Ascending aorta (tissue), 2 donors: ENCODE measurements at regions of chr1 and their contacts with region 1.

Region 1: DNA sequence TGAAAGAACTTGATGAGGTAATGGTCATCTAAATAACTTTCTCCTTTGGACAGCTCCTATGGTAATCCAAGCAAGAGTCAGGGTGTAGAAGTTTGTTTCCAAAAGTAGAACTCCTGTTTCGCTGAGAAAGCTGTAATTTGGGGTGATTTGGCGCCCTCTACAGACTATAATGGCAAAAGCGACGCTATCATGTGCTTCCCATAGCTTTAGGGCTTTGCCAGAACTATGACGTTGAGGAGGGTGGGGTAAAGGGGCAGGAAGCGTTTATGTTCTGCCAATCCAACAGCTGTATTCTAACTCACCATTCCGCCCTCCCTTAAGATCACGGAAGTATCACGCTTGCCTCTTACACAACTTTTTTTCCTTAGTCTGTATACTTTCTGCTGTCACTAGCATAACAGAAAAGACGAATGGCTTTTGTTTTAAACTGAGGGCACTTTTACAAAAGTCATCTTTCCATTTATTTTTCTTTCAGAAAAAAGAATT is at the start of gene FMO4:
- DNase-seq: peak; percentile 85 to 97
- H3K4me3 ChIP-seq: peak within 1 kb of the TSS; percentile 52 to 61
- H3K27ac ChIP-seq: peak within 1 kb of the TSS; percentile 87
- H3K4me1 ChIP-seq: peaks cover 2 to 23% of the 10 kb centered on the region in 2 donors
- H3K27me3 ChIP-seq: no peaks in the 10 kb centered on the region
- CTCF ChIP-seq: peak; percentile 59 to 84 (median 64)
- total RNA-seq, gene FMO4: 30.1 TPM

Region 2: GRCh38 chr1:170967042-170967910 is 346.6 kb before region 1 on chr1:
- intact Hi-C with region 1: loop called (anchors 2 kb)
- DNase-seq: no peak
- H3K4me3 ChIP-seq: no peak overlapping the region
- H3K27ac ChIP-seq: no peak overlapping the region
- H3K4me1 ChIP-seq: no peaks in the 10 kb centered on the region
- H3K27me3 ChIP-seq: no peaks in the 10 kb centered on the region
- CTCF ChIP-seq: peak; percentile 37 to 68 (median 64)

Region 3: GRCh38 chr1:171141688-171142415 is 172.0 kb before region 1 on chr1:
- intact Hi-C with region 1: loop called (anchors 5 kb)
- DNase-seq: peak; percentile 34 to 89
- H3K4me3 ChIP-seq: peak overlapping the region in 1 of 2 donors; percentile 21
- H3K27ac ChIP-seq: peak overlapping the region; percentile 88 to 89
- H3K4me1 ChIP-seq: peaks cover 5 to 54% of the 10 kb centered on the region in 2 donors
- H3K27me3 ChIP-seq: no peaks in the 10 kb centered on the region
- CTCF ChIP-seq: peak in 2 of 3 experiments; percentile 25 to 32

Region 4: GRCh38 chr1:171245458-171246064 is 68.3 kb before region 1 on chr1:
- intact Hi-C with region 1: loop called (anchors 2 kb)
- DNase-seq: no peak
- H3K4me3 ChIP-seq: no peak overlapping the region
- H3K27ac ChIP-seq: no peak overlapping the region
- H3K4me1 ChIP-seq: no peaks in the 10 kb centered on the region
- H3K27me3 ChIP-seq: no peaks in the 10 kb centered on the region
- CTCF ChIP-seq: peak; percentile 47 to 63 (median 53)

Region 5: DNA sequence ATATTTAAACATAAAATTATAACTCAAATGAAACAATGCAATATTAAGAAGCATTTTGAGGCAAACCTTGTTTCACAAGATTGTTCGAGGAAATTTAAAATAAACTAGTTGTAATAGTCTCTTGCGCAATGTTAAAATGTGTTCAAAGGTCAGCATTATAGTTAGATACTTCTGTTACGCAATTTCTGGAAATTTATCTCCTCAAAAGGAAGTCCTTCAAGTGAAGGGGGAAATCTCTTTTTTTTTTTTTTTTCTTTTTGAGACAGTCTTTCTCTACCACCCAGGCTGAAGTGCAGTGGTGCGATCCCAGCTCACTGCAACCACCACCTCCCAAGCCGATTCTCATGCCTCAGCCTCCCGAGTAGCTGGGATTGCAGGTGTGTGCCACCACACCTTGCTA is 52.2 kb after region 1 on chr1:
- intact Hi-C with region 1: loop called (anchors 2 kb)
- DNase-seq: no peak
- H3K4me3 ChIP-seq: no peak overlapping the region
- H3K27ac ChIP-seq: peak overlapping the region; percentile 22 to 43
- H3K4me1 ChIP-seq: peaks cover 0 to 16% of the 10 kb centered on the region in 2 donors
- H3K27me3 ChIP-seq: no peaks in the 10 kb centered on the region
- CTCF ChIP-seq: no peak

Region 6: DNA sequence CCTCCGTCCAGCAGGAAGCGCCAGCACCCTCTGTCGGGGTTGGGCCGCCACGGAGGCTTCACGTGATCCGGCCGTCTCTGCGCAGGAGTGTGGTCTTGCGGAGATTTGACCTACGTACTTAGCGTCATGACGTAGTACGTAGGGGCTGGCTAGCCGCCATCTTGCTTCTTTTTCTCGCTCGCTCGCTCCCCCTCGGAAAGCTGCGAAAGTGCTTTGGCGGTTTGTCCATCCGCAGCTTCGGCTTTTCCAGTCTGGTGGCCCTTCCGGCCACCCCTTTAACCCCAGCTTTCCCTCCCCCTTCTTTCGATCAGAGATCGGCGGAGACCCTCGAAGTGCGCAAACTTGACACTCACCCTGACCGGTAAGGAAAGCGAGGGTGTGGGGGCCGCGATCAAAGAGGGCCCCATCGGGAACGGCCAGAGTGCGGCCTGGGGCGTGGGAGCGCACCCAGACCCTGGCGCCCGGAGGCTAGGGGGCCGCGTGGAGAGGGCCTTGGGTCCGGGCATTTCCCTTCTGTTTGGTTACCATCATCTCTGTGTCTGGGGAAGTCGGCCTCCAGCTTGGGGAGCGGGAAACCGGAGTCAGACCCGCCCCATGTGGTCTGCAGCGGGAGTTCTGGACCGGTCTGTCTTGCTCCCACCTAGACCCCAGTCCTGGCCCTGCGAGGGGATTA is 171.6 kb after region 1 on chr1 and contains the start of gene PRRC2C:
- intact Hi-C with region 1: loop called (anchors 2 kb)
- DNase-seq: peak; percentile 88 to 99
- H3K4me3 ChIP-seq: peak within 1 kb of the TSS; percentile 75 to 91
- H3K27ac ChIP-seq: peak within 1 kb of the TSS; percentile 97 to 100
- H3K4me1 ChIP-seq: peaks cover 3 to 19% of the 10 kb centered on the region in 2 donors
- H3K27me3 ChIP-seq: no peaks in the 10 kb centered on the region
- CTCF ChIP-seq: peak in 2 of 3 experiments; percentile 83 to 89
- total RNA-seq, gene PRRC2C: 46.3 TPM

Region 7: GRCh38 chr1:171781176-171781875 is 467.4 kb after region 1 on chr1 and contains the start of gene METTL13:
- intact Hi-C with region 1: no loop called
- DNase-seq: peak; percentile 95 to 100
- H3K4me3 ChIP-seq: peak within 1 kb of the TSS; percentile 88 to 96
- H3K27ac ChIP-seq: peak within 1 kb of the TSS; percentile 78 to 91
- H3K4me1 ChIP-seq: peaks cover 5 to 15% of the 10 kb centered on the region in 2 donors
- H3K27me3 ChIP-seq: no peaks in the 10 kb centered on the region
- CTCF ChIP-seq: no peak
- total RNA-seq, gene METTL13: 6.9 TPM